Activated naive CD4-positive, alpha-beta T cell treated with anti-CD3 and anti-CD28 coated beads for 36 hours (primary cell): ENCODE measurements at regions of chr9 and their contacts with region 1.

Region 1: DNA sequence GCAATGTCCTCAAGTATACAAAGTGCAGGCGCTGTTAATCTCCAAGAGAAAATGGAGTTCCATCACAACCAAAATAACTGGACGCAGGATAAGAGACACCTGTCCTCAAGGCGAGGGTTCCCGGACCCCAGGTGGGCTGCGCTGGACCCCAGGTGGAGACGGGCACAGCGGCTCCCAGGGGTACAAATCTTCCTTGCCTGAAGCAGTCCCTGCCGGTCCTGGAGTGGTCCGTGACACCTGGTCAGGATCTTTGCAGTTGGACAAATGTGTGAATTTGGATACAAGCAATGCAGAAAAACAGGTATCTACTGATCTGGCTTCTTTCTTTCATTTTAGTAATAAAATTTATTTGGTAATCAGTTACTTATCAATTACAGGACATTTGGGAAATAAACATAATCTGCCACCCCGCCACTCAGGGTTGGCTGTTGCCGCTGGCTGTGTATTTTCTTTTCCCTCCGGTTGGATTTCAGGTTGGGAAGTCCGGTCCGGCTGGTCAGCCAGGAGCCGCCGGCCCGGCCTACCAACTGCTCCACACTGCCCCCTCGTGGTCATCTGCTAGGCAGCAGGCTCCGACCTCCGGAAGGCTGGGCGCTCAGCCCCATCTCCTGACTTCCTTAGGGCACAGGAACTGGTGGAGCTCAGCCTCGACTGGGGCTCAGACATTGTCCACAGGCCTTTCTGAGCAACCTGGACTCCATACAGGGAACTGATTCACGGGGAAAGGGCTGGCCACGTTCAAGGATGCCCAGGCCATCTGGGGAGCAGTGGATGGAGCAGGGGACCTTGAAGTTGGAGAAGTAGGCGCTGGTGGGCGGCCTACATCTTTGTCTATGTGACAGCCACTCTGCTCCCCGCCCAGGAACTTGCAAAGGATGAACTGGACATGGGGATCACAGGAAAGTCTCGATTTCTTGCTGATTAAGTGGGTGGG is 43.4 kb downstream of the NXNL2 start:
- DNase-seq: peak; percentile 75
- H3K4me3 Mint-ChIP-seq: no peak overlapping the region
- H3K27ac Mint-ChIP-seq: no peak overlapping the region
- H3K4me1 Mint-ChIP-seq: peaks cover 4% of the 10 kb centered on the region
- H3K27me3 Mint-ChIP-seq: peaks cover 8% of the 10 kb centered on the region

Region 2: GRCh38 chr9:87950765-87951488 is 627.5 kb before region 1 on chr9:
- CTCF ChIA-PET with region 1: interaction called, 3 read pairs
- intact Hi-C with region 1: loop called (anchors 5 kb)
- DNase-seq: no peak
- H3K4me3 Mint-ChIP-seq: no peak overlapping the region
- H3K27ac Mint-ChIP-seq: no peak overlapping the region
- H3K4me1 Mint-ChIP-seq: no peaks in the 10 kb centered on the region
- H3K27me3 Mint-ChIP-seq: peaks cover 32% of the 10 kb centered on the region

Region 3: DNA sequence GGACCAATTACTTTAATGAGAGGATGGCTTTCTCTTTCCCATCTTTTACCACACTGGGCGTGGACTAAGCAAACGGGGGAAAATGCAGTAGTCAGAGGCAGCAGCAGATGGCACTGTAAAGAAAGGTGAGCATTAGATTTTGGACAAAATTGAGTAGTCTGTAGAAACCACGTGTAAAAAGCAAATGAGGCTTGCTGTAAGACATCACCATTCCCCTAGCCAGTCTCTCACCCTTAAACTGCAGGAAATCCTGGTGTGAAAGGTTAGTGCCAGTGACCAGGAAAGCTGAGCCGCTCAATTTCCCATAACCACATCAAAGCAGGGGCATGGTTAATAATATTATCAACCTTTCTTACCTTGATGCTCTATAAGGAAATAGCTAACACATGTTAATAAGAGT is 471.9 kb before region 1 on chr9:
- CTCF ChIA-PET with region 1: interaction called, 6 read pairs
- intact Hi-C with region 1: loop called (anchors 1 kb)
- DNase-seq: peak; percentile 34
- H3K4me3 Mint-ChIP-seq: no peak overlapping the region
- H3K27ac Mint-ChIP-seq: no peak overlapping the region
- H3K4me1 Mint-ChIP-seq: no peaks in the 10 kb centered on the region
- H3K27me3 Mint-ChIP-seq: peaks cover 28% of the 10 kb centered on the region

Region 4: GRCh38 chr9:88173378-88173999 is 404.9 kb before region 1 on chr9:
- CTCF ChIA-PET with region 1: no interaction called
- intact Hi-C with region 1: loop called (anchors 1 kb)
- DNase-seq: peak; percentile 75
- H3K4me3 Mint-ChIP-seq: no peak overlapping the region
- H3K27ac Mint-ChIP-seq: no peak overlapping the region
- H3K4me1 Mint-ChIP-seq: peaks cover 4% of the 10 kb centered on the region
- H3K27me3 Mint-ChIP-seq: peaks cover 6% of the 10 kb centered on the region

Region 5: DNA sequence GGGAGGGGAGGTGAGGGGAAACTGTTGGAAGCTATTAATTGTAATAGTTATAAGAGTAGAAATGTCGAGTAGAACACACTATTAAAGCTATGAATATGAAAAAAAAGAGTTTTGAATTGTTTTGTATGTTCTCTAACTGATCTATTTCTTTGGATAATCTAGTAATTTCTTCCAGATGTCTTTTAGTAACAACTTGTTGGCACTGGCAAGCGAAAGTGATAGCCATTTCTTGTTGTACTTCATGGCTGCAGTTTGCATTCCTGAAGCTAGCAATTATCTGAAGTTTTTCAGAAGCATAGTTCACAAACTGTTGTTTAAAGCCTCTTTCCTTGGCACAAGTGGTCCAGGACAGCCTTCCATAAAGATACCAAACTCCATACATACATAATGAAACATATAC is 390.8 kb before region 1 on chr9:
- CTCF ChIA-PET with region 1: no interaction called
- intact Hi-C with region 1: no loop called
- DNase-seq: no peak
- H3K4me3 Mint-ChIP-seq: no peak overlapping the region
- H3K27ac Mint-ChIP-seq: no peak overlapping the region
- H3K4me1 Mint-ChIP-seq: no peaks in the 10 kb centered on the region
- H3K27me3 Mint-ChIP-seq: peaks cover 22% of the 10 kb centered on the region

Region 6: GRCh38 chr9:88476491-88477271 is 101.7 kb before region 1 on chr9:
- CTCF ChIA-PET with region 1: no interaction called
- intact Hi-C with region 1: loop called (anchors 5 kb)
- DNase-seq: peak; percentile 7
- H3K4me3 Mint-ChIP-seq: no peak overlapping the region
- H3K27ac Mint-ChIP-seq: no peak overlapping the region
- H3K4me1 Mint-ChIP-seq: peaks cover 18% of the 10 kb centered on the region
- H3K27me3 Mint-ChIP-seq: no peaks in the 10 kb centered on the region

Region 7: GRCh38 chr9:88488166-88488565 is 90.2 kb before region 1 on chr9:
- CTCF ChIA-PET with region 1: no interaction called
- intact Hi-C with region 1: no loop called
- DNase-seq: no peak
- H3K4me3 Mint-ChIP-seq: no peak overlapping the region
- H3K27ac Mint-ChIP-seq: no peak overlapping the region
- H3K4me1 Mint-ChIP-seq: no peaks in the 10 kb centered on the region
- H3K27me3 Mint-ChIP-seq: no peaks in the 10 kb centered on the region